ENCODE measurements at regions of chr2 and their contacts with region 1.

Region 1: DNA sequence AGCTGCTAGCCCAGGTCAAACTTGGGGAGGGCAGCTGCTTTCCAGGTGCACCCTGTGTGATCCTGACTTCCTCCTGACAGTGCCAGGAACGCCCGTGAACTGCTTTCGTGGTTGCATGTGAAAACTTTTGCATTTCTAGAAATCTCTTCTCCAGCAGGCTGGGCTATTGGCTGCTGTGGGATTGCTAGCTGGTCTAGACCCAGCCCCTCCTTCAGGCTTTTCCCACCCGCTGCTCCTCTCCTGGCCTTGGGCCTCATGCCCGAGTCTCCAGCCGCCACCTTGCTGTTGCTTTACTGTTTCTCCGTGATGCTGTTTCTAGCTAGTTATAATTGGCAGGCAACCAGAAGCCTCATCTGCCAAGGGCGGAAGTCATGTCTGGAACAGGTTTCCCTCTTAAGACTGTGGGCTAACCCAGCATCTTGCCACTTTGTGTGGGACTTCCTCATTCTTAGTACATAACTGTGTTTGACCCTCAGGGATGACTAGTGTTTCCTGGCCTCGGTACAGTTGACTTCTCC is 27.0 kb upstream of the MGAT4A start:
- DNase-seq: peak; percentile 60 to 88 (median 74)
- ATAC-seq: peak; percentile 87
- H3K4me3 ChIP-seq: no peak overlapping the region
- H3K27ac ChIP-seq: peak overlapping the region; percentile 1 to 77 (median 48)
- H3K4me1 ChIP-seq: peaks cover 25% of the 10 kb centered on the region
- H3K27me3 ChIP-seq: no peaks in the 10 kb centered on the region
- CTCF ChIP-seq: peak in 1 of 7 experiments; percentile 13
- POLR2A ChIP-seq: no peak

Region 2: DNA sequence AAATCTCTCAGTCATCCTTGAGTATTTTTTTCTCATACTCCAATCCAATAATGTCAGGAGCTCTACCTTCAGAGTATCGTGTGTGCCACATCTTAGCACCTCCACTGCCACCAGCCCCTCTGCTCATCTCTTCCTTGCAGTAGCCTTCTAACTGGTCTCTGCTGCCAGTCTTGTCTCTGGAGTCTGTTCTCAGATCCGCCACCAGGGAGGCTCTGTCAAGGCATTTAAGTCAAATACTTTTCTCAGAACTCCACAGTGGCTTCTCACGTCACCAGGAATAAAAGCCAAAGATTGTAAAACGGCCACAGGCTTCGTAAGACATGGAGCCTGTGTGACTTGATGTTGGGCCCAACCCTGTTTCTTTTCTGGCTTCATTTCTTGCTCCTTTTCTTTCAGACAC is 142.5 kb before region 1 on chr2:
- intact Hi-C with region 1: no loop called
- DNase-seq: no peak
- ATAC-seq: no peak
- H3K4me3 ChIP-seq: no peak overlapping the region
- H3K27ac ChIP-seq: no peak overlapping the region
- H3K4me1 ChIP-seq: peaks cover 11% of the 10 kb centered on the region
- H3K27me3 ChIP-seq: no peaks in the 10 kb centered on the region
- CTCF ChIP-seq: peak in 1 of 7 experiments; percentile 9
- POLR2A ChIP-seq: no peak

Region 3: DNA sequence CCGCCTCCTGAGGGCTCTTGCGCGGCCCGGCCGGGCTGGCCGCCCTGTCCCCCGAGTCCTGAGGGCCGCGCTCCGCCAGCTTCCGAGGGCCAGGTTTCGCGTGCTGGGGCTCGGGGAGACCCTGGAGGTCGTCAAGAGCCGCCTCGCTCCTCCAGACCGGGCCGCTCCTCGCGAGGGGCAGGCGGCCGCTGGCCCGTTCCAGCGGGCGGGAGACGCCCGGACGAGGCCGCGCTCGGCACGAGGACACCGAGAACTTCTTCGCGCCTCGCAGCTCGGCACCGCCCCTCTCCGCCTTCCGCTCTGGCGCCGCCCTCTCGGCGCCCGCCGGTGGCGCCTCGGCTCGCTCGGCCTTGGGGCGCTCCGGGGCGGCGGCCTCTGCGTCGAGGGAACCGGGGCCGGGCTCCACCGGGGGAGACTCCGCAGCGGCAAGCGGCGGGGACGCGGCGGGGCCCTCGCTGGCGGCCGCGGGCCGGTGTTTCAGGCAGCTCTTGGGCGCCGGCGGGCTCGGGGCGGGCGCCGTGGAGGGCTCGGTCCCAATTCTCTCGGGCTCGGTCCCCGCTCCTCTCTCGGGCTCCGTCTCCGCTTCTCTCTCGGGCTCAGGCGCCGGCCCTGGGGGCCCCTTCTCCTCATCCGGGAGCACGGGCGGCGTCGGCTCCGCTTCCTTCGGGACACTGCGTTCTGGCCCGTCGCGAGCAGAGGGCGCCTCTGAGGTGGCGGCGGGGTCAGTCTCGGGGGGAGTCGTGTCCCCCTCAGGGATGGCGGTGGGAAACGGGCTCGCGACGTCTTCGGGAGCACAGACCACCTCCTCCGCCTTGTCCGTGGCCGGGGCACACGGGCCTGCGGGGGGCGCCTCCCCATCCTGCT is 64.6 kb after region 1 on chr2:
- intact Hi-C with region 1: loop called (anchors 10 kb)
- DNase-seq: peak in 3 of 4 donors; percentile 36 to 47 (median 44)
- ATAC-seq: peak; percentile 66
- H3K4me3 ChIP-seq: no peak overlapping the region
- H3K27ac ChIP-seq: peak overlapping the region in 3 of 4 donors; percentile 51 to 59 (median 59)
- H3K4me1 ChIP-seq: no peaks in the 10 kb centered on the region
- H3K27me3 ChIP-seq: no peaks in the 10 kb centered on the region
- CTCF ChIP-seq: peak in 5 of 7 experiments; percentile 8 to 28 (median 26)
- POLR2A ChIP-seq: no peak

Region 4: GRCh38 chr2:98846041-98846440 is 88.1 kb after region 1 on chr2:
- intact Hi-C with region 1: no loop called
- DNase-seq: no peak
- ATAC-seq: no peak
- H3K4me3 ChIP-seq: no peak overlapping the region
- H3K27ac ChIP-seq: no peak overlapping the region
- H3K4me1 ChIP-seq: peaks cover 7% of the 10 kb centered on the region
- H3K27me3 ChIP-seq: no peaks in the 10 kb centered on the region
- CTCF ChIP-seq: no peak
- POLR2A ChIP-seq: no peak

Region 5: DNA sequence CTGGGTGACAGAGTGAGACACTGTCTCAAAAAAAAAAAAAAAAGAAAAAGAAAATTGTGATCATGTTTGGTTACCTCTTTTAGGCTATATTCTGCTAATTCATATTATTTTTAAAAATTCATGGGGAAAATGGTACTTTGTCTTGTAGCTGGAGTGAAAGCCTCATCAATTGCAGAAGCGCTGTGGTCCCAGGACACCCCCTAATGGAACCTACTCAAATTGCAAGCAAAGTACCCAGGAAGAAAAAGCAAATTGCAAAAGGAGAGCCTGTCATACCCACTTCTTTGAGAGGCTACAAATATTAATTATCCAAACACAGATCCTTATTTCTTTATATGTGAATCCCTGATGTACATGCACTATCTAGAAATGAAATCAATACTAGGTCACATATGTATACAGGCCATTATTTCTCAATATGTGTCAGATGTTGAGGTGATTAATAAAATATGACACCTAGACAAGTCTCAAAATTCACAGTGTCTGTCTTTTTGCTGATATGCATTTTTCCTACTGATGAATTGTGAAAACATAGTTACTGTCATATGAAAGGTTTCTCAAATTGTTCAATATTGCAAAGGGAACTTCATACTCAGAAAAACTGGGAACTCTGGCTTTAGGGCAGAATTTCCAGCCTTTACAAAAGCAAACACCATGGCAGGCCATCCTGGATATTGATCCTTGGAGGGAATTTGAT is 165.4 kb after region 1 on chr2:
- intact Hi-C with region 1: no loop called
- DNase-seq: no peak
- ATAC-seq: no peak
- H3K4me3 ChIP-seq: no peak overlapping the region
- H3K27ac ChIP-seq: no peak overlapping the region
- H3K4me1 ChIP-seq: no peaks in the 10 kb centered on the region
- H3K27me3 ChIP-seq: no peaks in the 10 kb centered on the region
- CTCF ChIP-seq: peak in 1 of 7 experiments; percentile 20
- POLR2A ChIP-seq: no peak

Measured in body of pancreas (tissue), 4 donors.